Activated CD4-positive, alpha-beta memory T cell treated with anti-CD3 and anti-CD28 coated beads, Interleukin-2, amount 10 ng/mL, durations not matched to agents 7 days and 5 days (primary cell): ENCODE measurements at regions of chr11 and their contacts with region 1.

Region 1: DNA sequence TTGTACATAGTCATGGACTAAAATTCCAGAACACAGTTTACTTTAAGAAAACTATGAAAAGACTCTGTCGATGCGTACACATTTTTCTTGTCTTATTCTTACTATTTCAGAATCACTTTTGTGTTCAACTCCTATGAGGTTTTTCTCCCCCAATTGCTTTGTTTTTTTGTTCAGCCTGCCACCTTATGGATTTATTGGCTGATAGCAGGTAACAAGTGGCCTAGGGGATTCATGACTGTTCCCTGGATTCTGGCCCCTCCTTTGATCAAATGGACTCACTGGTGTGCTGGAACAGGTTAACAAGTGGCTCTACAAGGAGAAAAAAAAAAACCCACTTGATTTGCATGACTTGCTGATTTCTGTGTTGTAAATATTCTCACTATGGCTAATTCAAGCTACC is 10.6 kb downstream of the MMP20 start:
- DNase-seq: no peak
- H3K4me3 Mint-ChIP-seq: no peak overlapping the region
- H3K27ac Mint-ChIP-seq: no peak overlapping the region
- H3K4me1 Mint-ChIP-seq: peaks cover 9% of the 10 kb centered on the region
- H3K27me3 Mint-ChIP-seq: peaks cover 5% of the 10 kb centered on the region

Region 2: DNA sequence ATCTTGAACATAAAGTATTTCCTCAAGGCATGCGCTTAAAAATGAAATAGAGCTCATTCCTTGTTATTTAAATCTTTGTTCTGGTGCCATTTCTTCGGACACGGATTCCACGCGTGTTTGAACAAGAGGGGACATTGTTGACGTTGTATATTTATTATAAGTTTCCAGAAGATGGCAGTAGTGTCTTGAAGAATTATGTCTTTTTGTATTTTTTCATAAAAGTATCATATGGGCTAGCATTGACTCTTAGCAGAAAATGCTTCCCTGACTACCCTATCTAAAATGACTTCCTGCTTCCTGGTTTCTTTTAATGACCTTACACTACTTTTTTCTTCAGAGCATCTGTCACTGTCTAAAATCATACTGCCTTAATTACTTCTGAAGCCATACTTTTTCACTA is 247.1 kb before region 1 on chr11:
- CTCF ChIA-PET with region 1: interaction called, 16 read pairs
- POLR2A ChIA-PET with region 1: no interaction called
- DNase-seq: no peak
- H3K4me3 Mint-ChIP-seq: no peak overlapping the region
- H3K27ac Mint-ChIP-seq: no peak overlapping the region
- H3K4me1 Mint-ChIP-seq: peaks cover 25% of the 10 kb centered on the region
- H3K27me3 Mint-ChIP-seq: no peaks in the 10 kb centered on the region

Region 3: DNA sequence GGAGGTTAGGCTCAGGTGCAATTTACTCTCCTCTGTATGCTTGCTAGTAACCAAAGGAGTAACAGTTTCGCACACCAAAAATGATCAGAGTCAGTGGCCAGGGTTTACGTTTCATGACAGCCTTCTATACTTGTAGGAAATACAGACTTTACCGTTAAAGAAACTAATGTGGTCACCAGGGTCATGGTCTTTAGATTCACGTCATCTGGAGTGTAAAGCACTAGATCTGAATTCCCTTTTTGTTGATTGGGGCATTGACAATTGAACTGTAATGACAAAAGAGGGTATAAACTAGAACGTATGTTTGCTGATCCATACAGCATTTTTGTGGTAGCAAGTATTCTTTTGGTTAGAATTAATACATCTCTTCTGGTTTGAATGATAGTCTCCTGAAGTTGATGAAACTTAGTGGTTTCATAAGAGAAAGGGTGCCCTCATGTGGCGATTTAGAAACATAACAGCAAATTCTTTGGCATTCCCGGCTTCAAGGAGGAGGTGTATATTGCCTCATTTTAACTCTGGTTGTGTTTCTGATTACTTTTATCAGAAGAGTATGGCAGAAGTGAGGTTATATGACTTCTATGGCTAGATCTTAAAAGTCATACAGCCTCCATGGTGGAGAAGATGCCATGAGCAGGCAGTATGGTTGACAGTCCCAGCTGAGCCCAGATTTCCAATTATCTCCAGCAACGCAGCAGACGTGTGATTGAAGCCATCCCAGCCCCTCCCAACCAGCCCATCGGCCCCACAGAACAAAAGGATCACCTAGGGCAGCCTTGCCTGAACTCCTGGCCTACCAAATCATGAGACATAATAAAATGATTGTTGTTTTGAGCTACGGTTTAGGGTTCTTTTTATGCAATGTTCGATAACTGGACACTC is 119.1 kb before region 1 on chr11:
- CTCF ChIA-PET with region 1: interaction called, 22 read pairs
- POLR2A ChIA-PET with region 1: interaction called, 3 read pairs
- DNase-seq: peak; percentile 24
- H3K4me3 Mint-ChIP-seq: no peak overlapping the region
- H3K27ac Mint-ChIP-seq: no peak overlapping the region
- H3K4me1 Mint-ChIP-seq: peaks cover 7% of the 10 kb centered on the region
- H3K27me3 Mint-ChIP-seq: peaks cover 24% of the 10 kb centered on the region

Region 4: DNA sequence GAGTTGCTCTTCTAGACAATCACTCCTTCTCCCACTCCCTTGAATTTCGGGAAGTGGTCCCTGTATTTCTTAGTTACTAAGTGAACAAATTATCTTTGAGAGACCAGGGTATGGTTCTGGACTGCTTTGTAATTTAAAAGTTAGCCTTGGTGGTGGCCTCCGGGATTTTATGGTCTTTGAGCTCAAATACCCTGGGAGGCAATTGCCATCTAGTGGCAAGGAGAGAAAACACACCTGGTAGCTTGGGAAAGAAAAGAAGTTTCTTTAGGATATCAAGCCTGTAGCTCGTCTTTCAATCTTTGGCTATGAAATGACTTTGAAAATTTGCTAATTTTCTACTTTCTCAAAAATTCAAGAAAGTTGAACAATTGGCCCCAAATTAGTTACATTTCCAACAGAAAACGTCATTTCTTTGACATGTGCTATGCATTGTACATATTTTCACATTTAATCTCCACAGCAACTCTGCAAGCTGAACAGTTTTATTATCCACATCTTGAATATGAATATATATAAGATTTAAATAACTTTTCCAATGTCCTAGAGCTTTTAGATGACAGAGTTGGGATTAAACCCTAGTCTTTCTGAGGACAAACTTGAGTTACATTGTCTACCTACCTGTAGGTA is 52.0 kb after region 1 on chr11:
- CTCF ChIA-PET with region 1: interaction called, 19 read pairs
- POLR2A ChIA-PET with region 1: no interaction called
- DNase-seq: no peak
- H3K4me3 Mint-ChIP-seq: no peak overlapping the region
- H3K27ac Mint-ChIP-seq: no peak overlapping the region
- H3K4me1 Mint-ChIP-seq: no peaks in the 10 kb centered on the region
- H3K27me3 Mint-ChIP-seq: peaks cover 5% of the 10 kb centered on the region